ENCODE measurements at regions of chr3 and their contacts with region 1.

Region 1: GRCh38 chr3:191051037-191051436 is 148.0 kb upstream of the OSTN start:
- DNase-seq: no peak
- H3K4me3 Mint-ChIP-seq: no peak overlapping the region
- H3K27ac Mint-ChIP-seq: no peak overlapping the region
- H3K4me1 Mint-ChIP-seq: no peaks in the 10 kb centered on the region
- H3K27me3 Mint-ChIP-seq: no peaks in the 10 kb centered on the region

Region 2: GRCh38 chr3:190883973-190884832 is 166.8 kb before region 1 on chr3:
- CTCF ChIA-PET with region 1: interaction called, 14 read pairs
- DNase-seq: peak; percentile 42
- H3K4me3 Mint-ChIP-seq: no peak overlapping the region
- H3K27ac Mint-ChIP-seq: no peak overlapping the region
- H3K4me1 Mint-ChIP-seq: no peaks in the 10 kb centered on the region
- H3K27me3 Mint-ChIP-seq: no peaks in the 10 kb centered on the region